ENCODE measurements at regions of chr6 and their contacts with region 1.

Region 1: DNA sequence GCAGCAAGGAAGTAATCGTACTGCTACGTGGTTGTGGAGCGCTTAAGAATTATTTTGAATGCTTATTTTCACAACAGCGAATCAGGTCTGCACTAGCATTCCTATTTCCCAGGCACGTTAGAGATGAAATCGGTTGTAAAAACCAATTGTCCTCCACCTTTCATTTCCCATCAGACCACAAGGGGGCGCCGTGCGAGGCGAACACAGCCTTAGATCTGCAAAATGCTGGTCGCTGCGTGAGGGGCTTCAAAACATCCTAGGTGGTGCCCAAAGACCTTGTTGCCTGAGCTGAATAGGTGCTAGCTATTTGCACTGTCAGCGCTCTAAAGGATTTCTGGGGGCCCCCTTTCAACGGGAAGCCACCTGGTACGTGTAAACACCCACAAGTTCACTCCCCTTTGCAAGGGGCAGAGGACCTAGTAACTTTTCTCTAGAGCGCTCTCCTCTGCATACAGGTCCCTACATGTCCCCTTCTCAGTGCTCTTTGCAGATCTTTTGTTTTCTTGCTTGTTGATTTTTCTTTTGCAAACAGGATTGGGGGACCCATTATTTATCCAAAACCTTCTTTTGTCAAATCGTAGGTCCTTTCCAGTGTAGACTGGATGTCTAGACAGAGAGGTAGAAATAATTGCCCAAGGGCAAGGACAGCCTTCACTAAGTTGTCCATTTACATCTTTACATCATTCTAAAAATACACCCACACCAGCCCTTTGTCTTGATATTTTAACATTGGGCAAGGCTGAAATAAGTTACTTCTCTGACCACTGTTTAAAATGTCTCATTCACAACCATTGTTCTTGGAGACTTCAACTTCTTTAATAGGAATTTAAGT is 59.8 kb downstream of the NEDD9 start:
- DNase-seq: peak; percentile 58 to 84 (median 74)
- ATAC-seq: peak; percentile 81
- H3K4me3 ChIP-seq: peak overlapping the region; percentile 24
- H3K4me3 Mint-ChIP-seq: no peak overlapping the region
- H3K27ac ChIP-seq: no peak overlapping the region
- H3K27ac Mint-ChIP-seq: no peak overlapping the region
- H3K4me1 ChIP-seq: peaks cover 9% of the 10 kb centered on the region
- H3K4me1 Mint-ChIP-seq: peaks cover 9% of the 10 kb centered on the region
- H3K27me3 ChIP-seq: no peaks in the 10 kb centered on the region
- H3K27me3 Mint-ChIP-seq: no peaks in the 10 kb centered on the region
- CTCF ChIP-seq: peak; percentile 91

Region 2: GRCh38 chr6:11144393-11144851 is 28.3 kb before region 1 on chr6:
- CTCF ChIA-PET with region 1: no interaction called
- POLR2A ChIA-PET with region 1: no interaction called
- intact Hi-C with region 1: loop called (anchors 1 to 2 kb)
- DNase-seq: peak; percentile 51 to 84 (median 64)
- ATAC-seq: peak; percentile 73
- H3K4me3 ChIP-seq: no peak overlapping the region
- H3K4me3 Mint-ChIP-seq: no peak overlapping the region
- H3K27ac ChIP-seq: no peak overlapping the region
- H3K27ac Mint-ChIP-seq: no peak overlapping the region
- H3K4me1 ChIP-seq: peaks cover 5% of the 10 kb centered on the region
- H3K4me1 Mint-ChIP-seq: no peaks in the 10 kb centered on the region
- H3K27me3 ChIP-seq: no peaks in the 10 kb centered on the region
- H3K27me3 Mint-ChIP-seq: no peaks in the 10 kb centered on the region
- CTCF ChIP-seq: peak; percentile 98

Region 3: DNA sequence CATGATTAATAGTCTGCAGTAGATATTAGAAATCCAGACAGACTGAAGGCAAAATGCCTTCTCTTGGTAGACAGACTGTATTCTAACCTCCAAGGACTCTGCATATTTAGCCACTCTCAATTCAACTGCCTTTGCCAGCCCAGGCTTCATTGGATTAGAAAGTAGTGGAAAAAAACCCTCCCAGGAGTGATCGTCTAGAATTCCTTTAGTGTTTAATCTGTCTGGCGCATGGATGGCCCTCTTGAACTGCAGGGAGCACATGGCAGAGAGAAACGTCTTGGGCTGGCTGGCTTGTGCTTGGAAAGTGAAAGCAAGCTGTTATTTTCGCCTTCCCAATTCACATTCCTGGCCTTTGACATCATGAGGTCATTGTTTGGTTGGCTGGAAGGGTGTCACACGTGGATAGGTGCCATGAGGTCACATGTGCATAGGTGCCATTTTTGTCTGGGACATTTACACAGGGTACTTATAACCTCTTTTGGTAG is 90.6 kb after region 1 on chr6:
- CTCF ChIA-PET with region 1: no interaction called
- POLR2A ChIA-PET with region 1: no interaction called
- intact Hi-C with region 1: no loop called
- DNase-seq: peak in 2 of 14 experiments; percentile 10 to 43
- ATAC-seq: no peak
- H3K4me3 ChIP-seq: no peak overlapping the region
- H3K4me3 Mint-ChIP-seq: no peak overlapping the region
- H3K27ac ChIP-seq: no peak overlapping the region
- H3K27ac Mint-ChIP-seq: no peak overlapping the region
- H3K4me1 ChIP-seq: peaks cover 31% of the 10 kb centered on the region
- H3K4me1 Mint-ChIP-seq: peaks cover 50% of the 10 kb centered on the region
- H3K27me3 ChIP-seq: no peaks in the 10 kb centered on the region
- H3K27me3 Mint-ChIP-seq: no peaks in the 10 kb centered on the region
- CTCF ChIP-seq: no peak

Region 4: GRCh38 chr6:11414176-11414963 is 241.7 kb after region 1 on chr6:
- CTCF ChIA-PET with region 1: no interaction called
- POLR2A ChIA-PET with region 1: no interaction called
- intact Hi-C with region 1: loop called in 1 of 2 experiments (anchors 10 kb)
- DNase-seq: peak in 11 of 14 experiments; percentile 2 to 87 (median 25)
- ATAC-seq: peak; percentile 96
- H3K4me3 ChIP-seq: no peak overlapping the region
- H3K4me3 Mint-ChIP-seq: peak overlapping the region; percentile 43
- H3K27ac ChIP-seq: peak overlapping the region in 1 of 2 donors; percentile 18
- H3K27ac Mint-ChIP-seq: peak overlapping the region; percentile 31
- H3K4me1 ChIP-seq: peaks cover 9% of the 10 kb centered on the region
- H3K4me1 Mint-ChIP-seq: peaks cover 26% of the 10 kb centered on the region
- H3K27me3 ChIP-seq: no peaks in the 10 kb centered on the region
- H3K27me3 Mint-ChIP-seq: no peaks in the 10 kb centered on the region
- CTCF ChIP-seq: no peak

Region 5: DNA sequence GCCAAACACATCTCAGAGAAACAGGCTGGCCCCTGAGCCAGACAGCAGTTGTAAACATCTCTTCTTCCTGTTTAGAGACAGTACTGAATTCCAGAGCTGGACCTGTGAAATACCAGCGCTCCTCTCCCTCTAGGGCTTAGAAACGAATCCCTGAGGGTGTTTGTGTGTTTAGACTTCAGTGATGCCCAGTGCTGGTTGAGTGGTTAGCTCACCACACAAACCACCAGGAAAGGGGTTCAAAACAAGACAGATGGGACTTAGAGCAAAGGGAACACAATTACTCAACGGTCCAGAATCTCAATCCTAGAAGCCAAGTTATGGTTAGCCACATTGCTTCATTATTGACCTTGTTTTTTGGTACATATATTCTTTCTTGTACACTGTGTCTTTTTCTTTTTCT is 256.2 kb after region 1 on chr6:
- CTCF ChIA-PET with region 1: no interaction called
- POLR2A ChIA-PET with region 1: no interaction called
- intact Hi-C with region 1: no loop called
- DNase-seq: no peak
- ATAC-seq: no peak
- H3K4me3 ChIP-seq: no peak overlapping the region
- H3K4me3 Mint-ChIP-seq: no peak overlapping the region
- H3K27ac ChIP-seq: no peak overlapping the region
- H3K27ac Mint-ChIP-seq: no peak overlapping the region
- H3K4me1 ChIP-seq: peaks cover 6% of the 10 kb centered on the region
- H3K4me1 Mint-ChIP-seq: peaks cover 15% of the 10 kb centered on the region
- H3K27me3 ChIP-seq: no peaks in the 10 kb centered on the region
- H3K27me3 Mint-ChIP-seq: no peaks in the 10 kb centered on the region
- CTCF ChIP-seq: no peak

Region 6: DNA sequence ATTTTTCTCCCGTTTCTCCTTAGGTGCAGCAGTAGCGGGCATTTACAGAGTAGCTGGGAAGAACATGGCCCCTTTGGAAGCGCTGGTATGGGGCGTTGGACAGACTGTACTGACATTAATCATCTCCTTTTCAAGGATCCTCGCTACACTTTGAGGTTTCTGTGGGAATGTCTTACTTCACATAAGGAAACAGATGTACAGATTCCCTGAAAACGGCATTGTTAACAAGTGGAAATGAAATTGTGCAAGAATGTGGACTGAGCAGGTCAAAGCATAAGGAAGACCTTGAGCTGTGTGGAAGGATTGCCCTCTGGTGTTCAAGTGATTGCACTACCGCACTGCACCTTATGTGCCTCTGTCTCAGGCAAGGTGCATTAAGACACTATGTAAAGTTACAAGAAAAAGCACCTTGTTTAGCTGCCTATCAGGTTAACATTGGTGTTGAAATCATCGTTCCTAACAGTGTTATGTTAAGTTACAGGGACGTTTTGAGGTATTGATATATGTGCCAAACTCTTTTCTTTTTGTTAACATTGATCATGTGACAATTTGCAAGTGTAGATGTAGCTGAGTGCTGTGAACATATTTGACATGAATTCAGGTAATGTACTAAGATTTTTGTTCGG is 402.8 kb after region 1 on chr6:
- CTCF ChIA-PET with region 1: interaction called, 5 read pairs
- POLR2A ChIA-PET with region 1: no interaction called
- intact Hi-C with region 1: loop called (anchors 2 kb)
- DNase-seq: peak in 13 of 14 experiments; percentile 7 to 76 (median 30)
- ATAC-seq: peak; percentile 95
- H3K4me3 ChIP-seq: no peak overlapping the region
- H3K4me3 Mint-ChIP-seq: no peak overlapping the region
- H3K27ac ChIP-seq: no peak overlapping the region
- H3K27ac Mint-ChIP-seq: no peak overlapping the region
- H3K4me1 ChIP-seq: no peaks in the 10 kb centered on the region
- H3K4me1 Mint-ChIP-seq: no peaks in the 10 kb centered on the region
- H3K27me3 ChIP-seq: no peaks in the 10 kb centered on the region
- H3K27me3 Mint-ChIP-seq: no peaks in the 10 kb centered on the region
- CTCF ChIP-seq: peak; percentile 73

Region 7: GRCh38 chr6:11851390-11851789 is 678.7 kb after region 1 on chr6:
- CTCF ChIA-PET with region 1: no interaction called
- POLR2A ChIA-PET with region 1: no interaction called
- intact Hi-C with region 1: no loop called
- DNase-seq: no peak
- ATAC-seq: no peak
- H3K4me3 ChIP-seq: no peak overlapping the region
- H3K4me3 Mint-ChIP-seq: no peak overlapping the region
- H3K27ac ChIP-seq: no peak overlapping the region
- H3K27ac Mint-ChIP-seq: no peak overlapping the region
- H3K4me1 ChIP-seq: no peaks in the 10 kb centered on the region
- H3K4me1 Mint-ChIP-seq: no peaks in the 10 kb centered on the region
- H3K27me3 ChIP-seq: no peaks in the 10 kb centered on the region
- H3K27me3 Mint-ChIP-seq: no peaks in the 10 kb centered on the region
- CTCF ChIP-seq: no peak